ENCODE measurements at regions of chr1 and their contacts with region 1.

Region 1: DNA sequence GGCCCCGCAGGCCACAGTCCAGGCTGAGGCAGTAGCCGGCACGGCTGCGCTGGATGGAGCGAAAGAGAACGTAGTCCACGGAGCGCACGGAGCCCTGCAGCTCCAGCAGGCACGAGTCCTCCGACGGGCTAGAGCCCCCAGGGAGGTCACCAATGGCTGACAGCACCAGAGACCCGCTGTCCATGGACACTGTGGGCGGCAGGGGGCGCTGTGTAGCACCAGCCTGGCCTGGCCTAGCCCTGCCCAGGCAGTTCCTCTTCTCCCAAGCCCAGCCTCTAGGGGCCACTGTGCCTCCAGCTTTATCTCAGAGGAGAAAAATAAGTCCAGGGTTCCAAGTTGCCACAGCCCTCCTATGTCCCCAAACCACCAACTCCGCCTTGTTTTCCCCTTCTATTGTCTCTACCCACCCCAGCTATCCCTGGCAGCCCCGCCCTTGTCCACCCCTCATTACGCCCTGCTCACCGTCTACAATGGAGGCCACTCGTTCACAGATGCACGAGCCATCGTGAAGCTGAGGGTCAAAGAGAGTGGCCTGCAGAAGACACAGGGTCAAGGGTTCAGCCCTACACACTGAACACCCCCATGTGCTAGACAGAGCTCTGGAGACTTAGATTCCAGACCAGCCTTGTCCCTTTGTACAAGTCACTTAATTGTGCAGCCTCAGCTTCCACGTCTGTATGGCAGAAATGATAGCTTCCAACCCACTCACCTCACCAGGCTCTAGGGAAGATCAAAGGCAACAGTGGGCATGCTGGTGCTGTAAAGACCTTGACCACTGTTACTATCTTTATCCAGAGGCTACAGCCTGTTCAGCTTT is 4.4 kb downstream of the ENTREP3 start:
- DNase-seq: peak; percentile 96
- H3K4me3 ChIP-seq: peak overlapping the region in 2 of 4 donors; percentile 24 to 34
- H3K27ac ChIP-seq: peak overlapping the region; percentile 58 to 73 (median 64)
- H3K4me1 ChIP-seq: peaks cover 0 to 36% (median 28%) of the 10 kb centered on the region in 4 donors
- H3K27me3 ChIP-seq: no peaks in the 10 kb centered on the region
- CTCF ChIP-seq: peak; percentile 99 to 100 (median 100)
- EP300 ChIP-seq: no peak
- POLR2A ChIP-seq: no peak

Region 2: GRCh38 chr1:154198756-154199562 is 1051.9 kb before region 1 on chr1:
- intact Hi-C with region 1: no loop called
- DNase-seq: no peak
- H3K4me3 ChIP-seq: no peak overlapping the region
- H3K27ac ChIP-seq: peak overlapping the region in 1 of 4 donors; percentile 5
- H3K4me1 ChIP-seq: peaks cover 0 to 5% (median 0%) of the 10 kb centered on the region in 4 donors
- H3K27me3 ChIP-seq: no peaks in the 10 kb centered on the region
- CTCF ChIP-seq: peak; percentile 17 to 59 (median 32)
- EP300 ChIP-seq: no peak
- POLR2A ChIP-seq: no peak

Region 3: DNA sequence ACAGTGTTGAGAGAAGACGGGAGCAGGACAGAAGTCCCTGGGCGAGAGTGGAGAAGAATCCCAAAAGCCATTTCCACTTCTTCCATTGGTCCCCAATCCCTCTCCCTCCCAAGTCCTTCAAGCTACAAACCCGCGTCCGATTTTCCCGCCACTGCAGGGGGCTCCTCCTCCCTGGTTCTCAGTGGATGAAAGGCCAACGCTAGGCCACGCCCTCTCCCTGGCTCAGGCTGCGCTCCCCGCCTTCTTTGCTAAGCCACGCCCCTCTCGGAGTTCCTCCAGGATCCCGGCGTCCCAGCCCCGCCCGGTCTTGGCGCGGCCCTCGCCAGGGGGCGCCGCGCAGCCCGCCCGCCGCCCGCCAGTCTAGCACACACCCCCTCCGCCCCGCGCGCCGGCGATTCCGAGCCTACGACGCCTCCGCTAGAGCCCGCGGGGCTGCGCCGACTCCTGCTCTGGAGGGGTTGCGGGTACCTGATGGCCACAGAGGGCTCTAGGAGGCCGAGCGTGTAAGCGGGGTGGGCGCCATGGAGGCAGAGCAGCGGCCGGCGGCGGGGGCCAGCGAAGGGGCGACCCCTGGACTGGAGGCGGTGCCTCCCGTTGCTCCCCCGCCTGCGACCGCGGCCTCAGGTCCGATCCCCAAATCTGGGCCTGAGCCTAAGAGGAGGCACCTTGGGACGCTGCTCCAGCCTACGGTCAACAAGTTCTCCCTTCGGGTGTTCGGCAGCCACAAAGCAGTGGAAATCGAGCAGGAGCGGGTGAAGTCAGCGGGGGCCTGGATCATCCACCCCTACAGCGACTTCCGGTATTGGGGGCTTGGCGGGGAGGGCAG is 26.4 kb after region 1 on chr1 and contains the start of gene HCN3:
- intact Hi-C with region 1: loop called (anchors 2 kb)
- DNase-seq: peak; percentile 99
- H3K4me3 ChIP-seq: peak within 1 kb of the TSS; percentile 55 to 86 (median 68)
- H3K27ac ChIP-seq: peak within 1 kb of the TSS; percentile 70 to 79 (median 77)
- H3K4me1 ChIP-seq: peaks cover 0 to 29% (median 23%) of the 10 kb centered on the region in 4 donors
- H3K27me3 ChIP-seq: no peaks in the 10 kb centered on the region
- CTCF ChIP-seq: peak in 2 of 4 experiments; percentile 21 to 61
- EP300 ChIP-seq: no peak
- POLR2A ChIP-seq: no peak
- total RNA-seq, gene HCN3: 1.2 to 5.5 (median 2.3) TPM

Region 4: DNA sequence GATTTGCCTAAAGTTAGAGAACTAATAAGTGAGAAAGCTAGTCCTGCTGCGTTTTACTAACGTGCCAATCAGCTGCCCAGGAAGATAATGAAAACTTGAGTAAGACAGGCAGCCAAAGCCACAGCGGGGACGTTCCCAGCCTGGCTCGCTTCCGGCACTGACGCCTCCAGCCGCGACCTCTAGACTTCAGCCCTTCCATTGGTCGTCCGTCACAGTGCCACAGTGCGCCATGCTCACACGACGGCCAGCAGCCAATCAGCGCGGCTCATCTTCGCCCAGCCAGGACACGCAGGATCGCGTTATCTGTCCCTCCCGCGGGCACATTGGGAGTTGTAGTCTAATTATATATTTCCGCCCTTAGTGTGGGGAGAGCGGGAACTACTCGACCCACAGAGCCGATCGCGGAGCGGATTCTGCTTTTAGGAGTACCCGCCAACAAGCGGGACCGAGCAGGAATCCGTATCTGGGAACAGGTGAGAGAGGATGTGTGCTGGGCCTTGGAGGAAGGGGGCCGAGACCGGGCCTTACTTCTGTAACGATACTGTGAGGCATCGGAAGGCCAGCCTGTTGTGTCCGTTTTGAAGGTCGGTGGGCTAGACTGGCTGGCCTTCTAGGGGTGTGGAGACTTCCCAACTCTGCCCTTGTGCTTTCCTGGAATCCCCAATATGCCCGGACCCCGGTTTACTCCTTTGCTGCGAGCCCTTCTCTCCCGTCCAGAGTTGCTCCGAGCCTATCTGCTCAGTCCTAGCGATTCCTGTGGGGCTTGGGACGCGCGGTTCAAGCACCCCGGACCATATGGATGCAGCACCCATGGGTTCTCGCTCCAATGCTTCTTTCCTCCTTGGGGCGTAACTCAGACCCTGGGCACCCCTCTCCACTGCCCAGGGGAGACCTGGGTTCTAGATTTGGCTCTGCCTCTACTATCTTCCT is 57.9 kb after region 1 on chr1 and contains the start of gene FDPS:
- intact Hi-C with region 1: loop called (anchors 2 kb)
- DNase-seq: peak; percentile 100
- H3K4me3 ChIP-seq: peak within 1 kb of the TSS; percentile 57 to 89 (median 78)
- H3K27ac ChIP-seq: peak within 1 kb of the TSS; percentile 88 to 91 (median 90)
- H3K4me1 ChIP-seq: peaks cover 0 to 26% (median 19%) of the 10 kb centered on the region in 4 donors
- H3K27me3 ChIP-seq: no peaks in the 10 kb centered on the region
- CTCF ChIP-seq: peak in 2 of 4 experiments; percentile 18 to 29
- EP300 ChIP-seq: no peak
- POLR2A ChIP-seq: peak; percentile 31 to 66
- total RNA-seq, gene FDPS: 73.7 to 96.8 (median 81.3) TPM

Region 5: GRCh38 chr1:155323798-155324610 is 73.2 kb after region 1 on chr1:
- intact Hi-C with region 1: loop called (anchors 2 kb)
- DNase-seq: peak; percentile 98
- H3K4me3 ChIP-seq: peak overlapping the region; percentile 66 to 91 (median 86)
- H3K27ac ChIP-seq: peak overlapping the region; percentile 95 to 100 (median 98)
- H3K4me1 ChIP-seq: peaks cover 0 to 51% (median 38%) of the 10 kb centered on the region in 4 donors
- H3K27me3 ChIP-seq: no peaks in the 10 kb centered on the region
- CTCF ChIP-seq: no peak
- EP300 ChIP-seq: peak in 1 of 4 donors; percentile 11
- POLR2A ChIP-seq: peak; percentile 54 to 94

Region 6: DNA sequence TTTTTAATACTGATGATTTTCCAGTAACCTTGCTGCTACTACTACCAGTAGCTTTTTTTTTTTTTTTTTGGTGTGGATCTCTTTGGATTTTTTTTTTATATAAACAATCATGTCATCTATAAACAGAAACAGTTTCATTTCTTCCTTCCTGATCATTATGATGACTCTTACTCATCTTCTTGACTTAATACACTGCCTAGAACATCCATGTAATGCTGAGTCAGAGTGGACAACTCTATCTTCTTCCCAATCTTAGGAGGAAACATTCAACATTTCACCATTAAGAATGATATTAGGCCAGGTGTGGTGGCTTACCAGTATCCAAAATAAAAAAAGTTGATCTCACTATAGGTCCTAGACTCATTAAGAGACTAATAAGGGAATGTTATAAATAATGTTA is 139.0 kb after region 1 on chr1:
- intact Hi-C with region 1: no loop called
- DNase-seq: no peak
- H3K4me3 ChIP-seq: no peak overlapping the region
- H3K27ac ChIP-seq: no peak overlapping the region
- H3K4me1 ChIP-seq: no peaks in the 10 kb centered on the region
- H3K27me3 ChIP-seq: no peaks in the 10 kb centered on the region
- CTCF ChIP-seq: no peak
- EP300 ChIP-seq: no peak
- POLR2A ChIP-seq: no peak

Region 7: GRCh38 chr1:155591770-155592169 is 340.9 kb after region 1 on chr1:
- intact Hi-C with region 1: loop called (anchors 2 kb)
- DNase-seq: no peak
- H3K4me3 ChIP-seq: no peak overlapping the region
- H3K27ac ChIP-seq: no peak overlapping the region
- H3K4me1 ChIP-seq: peaks cover 0 to 3% (median 0%) of the 10 kb centered on the region in 4 donors
- H3K27me3 ChIP-seq: no peaks in the 10 kb centered on the region
- CTCF ChIP-seq: peak; percentile 17 to 48 (median 38)
- EP300 ChIP-seq: no peak
- POLR2A ChIP-seq: no peak